ENCODE measurements at regions of chr10 and their contacts with region 1.

Region 1: DNA sequence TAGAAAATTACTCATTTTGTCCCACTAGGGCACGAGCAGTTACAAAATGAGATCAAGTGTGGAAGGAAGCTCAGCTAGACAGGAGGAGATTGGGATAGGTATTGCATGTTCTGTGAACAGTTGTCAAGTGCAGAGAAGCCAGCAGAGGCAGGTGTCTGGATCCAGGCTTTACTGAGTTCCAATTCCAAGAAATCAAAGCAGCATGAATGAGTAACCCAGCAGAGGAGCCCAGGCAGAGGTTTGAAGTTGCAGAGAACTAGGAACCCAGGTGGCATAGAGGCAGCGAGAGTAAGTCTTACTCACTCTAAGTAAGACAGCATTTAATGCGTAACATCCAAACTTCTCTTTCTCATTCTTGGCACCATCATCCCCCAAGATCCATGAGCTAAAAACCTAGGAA is 11.8 kb downstream of the MRC1 start:
- DNase-seq: no peak
- ATAC-seq: no peak
- H3K4me3 ChIP-seq: no peak overlapping the region
- H3K4me3 Mint-ChIP-seq: no peak overlapping the region
- H3K27ac ChIP-seq: no peak overlapping the region
- H3K27ac Mint-ChIP-seq: no peak overlapping the region
- H3K4me1 ChIP-seq: no peaks in the 10 kb centered on the region
- H3K4me1 Mint-ChIP-seq: no peaks in the 10 kb centered on the region
- H3K27me3 ChIP-seq: peaks cover 0 to 4% of the 10 kb centered on the region in 2 experiments
- H3K27me3 Mint-ChIP-seq: peaks cover 5 to 10% of the 10 kb centered on the region in 2 donors

Region 2: GRCh38 chr10:17747883-17748550 is 72.9 kb before region 1 on chr10:
- CTCF ChIA-PET with region 1: interaction called in 1 of 2 experiments, 13 read pairs
- POLR2A ChIA-PET with region 1: no interaction called
- DNase-seq: no peak
- ATAC-seq: no peak
- H3K4me3 ChIP-seq: no peak overlapping the region
- H3K4me3 Mint-ChIP-seq: no peak overlapping the region
- H3K27ac ChIP-seq: no peak overlapping the region
- H3K27ac Mint-ChIP-seq: no peak overlapping the region
- H3K4me1 ChIP-seq: peaks cover under 1 to 3% of the 10 kb centered on the region in 2 experiments
- H3K4me1 Mint-ChIP-seq: peaks cover 3 to 8% (median 5%) of the 10 kb centered on the region in 3 donors
- H3K27me3 ChIP-seq: no peaks in the 10 kb centered on the region
- H3K27me3 Mint-ChIP-seq: no peaks in the 10 kb centered on the region